ENCODE measurements at regions of chr16 and their contacts with region 1.

Region 1: GRCh38 chr16:3457434-3458252 is 14.2 kb downstream of the NAA60 start:
- DNase-seq: peak; percentile 94 to 96 (median 96)
- H3K4me3 ChIP-seq: peak overlapping the region; percentile 66 to 97 (median 85)
- H3K27ac ChIP-seq: peak overlapping the region; percentile 77 to 92
- H3K4me1 ChIP-seq: peaks cover 19 to 55% (median 52%) of the 10 kb centered on the region in 4 experiments
- H3K27me3 ChIP-seq: no peaks in the 10 kb centered on the region

Region 2: DNA sequence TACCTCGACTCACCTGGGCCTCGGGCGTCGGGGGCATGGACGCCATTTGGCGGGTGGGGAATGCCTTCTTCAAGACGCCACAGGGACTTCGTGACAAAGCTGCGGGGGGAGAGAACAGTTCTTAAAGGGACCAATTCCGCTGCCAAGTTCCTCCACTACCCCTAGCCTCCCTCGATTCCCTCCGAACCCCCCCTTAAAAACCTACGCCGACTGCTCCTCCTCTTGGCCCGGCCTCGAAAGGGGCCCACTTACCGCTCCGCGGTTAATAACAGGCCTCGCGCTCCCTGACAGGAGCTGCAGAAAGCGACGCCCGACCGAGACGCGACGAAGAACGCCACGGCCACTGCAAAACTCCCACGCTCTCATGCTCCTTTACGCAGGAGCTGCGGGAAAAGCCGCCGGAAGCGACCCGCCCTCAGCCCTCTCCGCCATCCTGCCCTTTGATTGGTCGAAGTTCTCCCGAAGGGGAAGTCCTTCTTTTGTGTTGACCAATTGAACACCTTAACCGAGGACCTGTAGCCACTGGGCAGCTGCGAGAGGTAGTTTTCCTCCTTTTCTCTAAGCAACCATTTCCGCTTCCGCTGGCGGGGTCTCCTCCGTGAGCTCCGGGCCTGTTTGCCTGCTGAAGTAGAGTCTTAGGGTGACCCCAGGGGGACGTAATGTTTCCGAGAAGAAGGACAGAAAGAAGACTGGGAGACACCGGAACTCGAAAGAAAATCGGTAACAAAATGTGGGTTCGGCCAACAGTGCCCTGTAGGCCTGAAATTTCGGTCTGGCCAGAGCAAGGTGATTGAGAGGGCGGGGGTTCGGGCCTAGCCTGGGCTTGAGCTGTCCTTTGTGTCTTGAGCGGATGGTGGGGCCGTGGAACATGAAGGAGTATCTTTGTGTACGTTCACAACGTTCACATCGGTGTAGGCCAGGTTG is 14.3 kb before region 1 on chr16 and contains the starts of genes NAA60 and ZNF597:
- CTCF ChIA-PET with region 1: interaction called, 5 read pairs
- POLR2A ChIA-PET with region 1: interaction called, 11 read pairs
- DNase-seq: peak; percentile 88 to 93 (median 92)
- H3K4me3 ChIP-seq: peak within 1 kb of the TSS; percentile 40 to 88 (median 73)
- H3K27ac ChIP-seq: peak within 1 kb of the TSS; percentile 87 to 91
- H3K4me1 ChIP-seq: peaks cover 3 to 13% (median 6%) of the 10 kb centered on the region in 4 experiments
- H3K27me3 ChIP-seq: no peaks in the 10 kb centered on the region

Region 3: DNA sequence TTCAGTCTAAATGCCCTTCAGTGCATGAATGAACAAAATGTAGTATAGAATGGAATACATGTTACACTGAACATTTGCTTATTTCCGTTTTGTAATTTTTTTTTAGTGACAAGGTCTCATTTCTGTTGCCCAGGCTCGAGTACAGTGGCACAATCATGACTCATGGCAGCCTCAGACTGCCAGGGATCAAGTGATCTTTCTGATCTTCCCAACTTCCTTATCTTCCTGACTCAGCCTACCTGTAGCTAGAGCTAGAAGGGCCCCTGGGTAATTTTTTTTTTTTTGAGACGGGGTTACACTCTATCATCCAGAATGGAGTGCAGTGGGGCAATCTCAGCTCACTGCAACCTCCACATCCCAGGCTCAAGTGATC is 161.1 kb after region 1 on chr16:
- CTCF ChIA-PET with region 1: no interaction called
- POLR2A ChIA-PET with region 1: no interaction called
- DNase-seq: peak; percentile 13 to 44 (median 25)
- H3K4me3 ChIP-seq: no peak overlapping the region
- H3K27ac ChIP-seq: no peak overlapping the region
- H3K4me1 ChIP-seq: peaks cover 0 to 4% (median under 1%) of the 10 kb centered on the region in 4 experiments
- H3K27me3 ChIP-seq: no peaks in the 10 kb centered on the region